ENCODE measurements at regions of chr19 and their contacts with region 1.

Region 1: GRCh38 chr19:45558399-45558878 is 26.2 kb downstream of the OPA3 start:
- DNase-seq: no peak
- H3K4me3 ChIP-seq: no peak overlapping the region
- H3K27me3 ChIP-seq: no peaks in the 10 kb centered on the region
- CTCF ChIP-seq: peak; percentile 76

Region 2: DNA sequence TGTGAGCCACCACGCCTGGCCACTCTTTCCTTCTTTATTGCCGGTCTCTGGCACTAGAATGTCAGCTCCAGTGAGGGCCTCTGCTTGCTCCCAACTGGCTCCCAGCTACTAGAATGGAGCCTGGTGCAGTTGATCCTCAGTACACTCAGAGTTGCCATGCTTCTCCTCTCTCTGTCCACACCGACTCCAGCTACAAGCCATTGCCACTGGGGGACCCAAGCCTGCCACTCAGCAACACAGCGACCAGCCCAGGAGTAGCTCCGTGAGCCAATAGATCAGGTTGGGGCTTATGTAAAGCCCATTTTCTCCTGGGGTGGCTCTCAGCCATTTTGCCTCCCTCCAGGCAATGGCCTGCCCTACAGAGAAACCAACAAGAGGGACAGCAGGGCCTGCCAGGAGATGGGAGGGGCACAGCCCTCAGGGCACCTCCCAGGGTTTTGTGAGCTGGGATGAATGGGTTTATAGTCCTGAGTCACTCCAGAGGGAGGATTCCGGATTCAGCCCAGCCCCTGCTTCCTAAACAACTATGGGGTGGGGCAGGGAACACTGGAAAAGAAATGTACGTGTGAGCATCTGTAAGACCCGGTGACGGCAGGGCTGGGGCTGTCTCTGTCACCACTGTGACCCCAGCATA is 10.3 kb before region 1 on chr19:
- CTCF ChIA-PET with region 1: interaction called, 14 read pairs
- POLR2A ChIA-PET with region 1: no interaction called
- DNase-seq: peak; percentile 66
- H3K4me3 ChIP-seq: no peak overlapping the region
- H3K27me3 ChIP-seq: no peaks in the 10 kb centered on the region
- CTCF ChIP-seq: no peak

Region 3: DNA sequence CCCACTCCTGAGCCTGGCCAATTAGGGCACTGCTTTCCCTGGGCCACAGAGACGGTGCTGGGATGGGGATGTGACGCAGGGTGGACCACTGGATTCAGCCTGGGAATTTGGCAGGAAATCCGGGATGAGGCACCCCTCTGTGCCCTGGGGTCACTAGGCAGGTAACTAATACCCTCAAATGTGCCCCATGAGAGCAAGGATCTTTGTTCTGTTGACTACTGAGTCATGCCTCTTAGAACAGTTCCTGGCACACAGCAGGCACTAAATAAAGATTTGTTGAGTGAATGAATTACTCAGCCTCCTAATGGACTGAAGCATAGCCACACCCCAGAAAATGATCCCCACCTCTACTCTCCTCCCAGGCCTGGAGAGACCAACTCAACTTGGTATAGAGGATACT is 10.3 kb after region 1 on chr19:
- CTCF ChIA-PET with region 1: interaction called, 14 read pairs
- POLR2A ChIA-PET with region 1: no interaction called
- DNase-seq: no peak
- H3K4me3 ChIP-seq: no peak overlapping the region
- H3K27me3 ChIP-seq: no peaks in the 10 kb centered on the region
- CTCF ChIP-seq: no peak

Region 4: DNA sequence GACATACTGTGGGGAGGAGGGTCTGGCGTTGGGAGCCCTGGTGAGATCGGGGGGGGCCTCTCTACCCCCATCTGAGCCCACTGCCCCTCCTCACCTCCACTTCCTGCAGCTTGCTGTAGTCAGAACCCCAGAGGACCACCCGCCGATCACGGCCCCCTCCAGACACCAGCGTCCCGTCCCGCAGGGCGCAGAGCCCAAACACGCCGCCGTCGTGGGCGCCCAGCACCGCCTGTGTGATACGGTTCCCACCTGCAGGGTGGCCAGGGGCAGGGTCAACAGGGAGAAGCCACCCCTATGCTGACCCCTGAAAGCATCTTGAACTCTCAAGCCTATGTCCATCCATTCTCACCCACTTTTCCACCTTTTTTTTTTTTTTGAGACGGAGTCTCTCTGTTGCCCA is 63.0 kb after region 1 on chr19:
- CTCF ChIA-PET with region 1: no interaction called
- POLR2A ChIA-PET with region 1: no interaction called
- DNase-seq: no peak
- H3K4me3 ChIP-seq: no peak overlapping the region
- H3K27me3 ChIP-seq: no peaks in the 10 kb centered on the region
- CTCF ChIP-seq: no peak

Measured in BJ (cell line).